ENCODE measurements at regions of chr2 and their contacts with region 1.

Region 1: GRCh38 chr2:157302492-157303099 is 23.0 kb downstream of the ERMN start:
- DNase-seq: peak; percentile 34
- H3K27ac ChIP-seq: no peak overlapping the region
- CTCF ChIP-seq: peak; percentile 83

Region 2: DNA sequence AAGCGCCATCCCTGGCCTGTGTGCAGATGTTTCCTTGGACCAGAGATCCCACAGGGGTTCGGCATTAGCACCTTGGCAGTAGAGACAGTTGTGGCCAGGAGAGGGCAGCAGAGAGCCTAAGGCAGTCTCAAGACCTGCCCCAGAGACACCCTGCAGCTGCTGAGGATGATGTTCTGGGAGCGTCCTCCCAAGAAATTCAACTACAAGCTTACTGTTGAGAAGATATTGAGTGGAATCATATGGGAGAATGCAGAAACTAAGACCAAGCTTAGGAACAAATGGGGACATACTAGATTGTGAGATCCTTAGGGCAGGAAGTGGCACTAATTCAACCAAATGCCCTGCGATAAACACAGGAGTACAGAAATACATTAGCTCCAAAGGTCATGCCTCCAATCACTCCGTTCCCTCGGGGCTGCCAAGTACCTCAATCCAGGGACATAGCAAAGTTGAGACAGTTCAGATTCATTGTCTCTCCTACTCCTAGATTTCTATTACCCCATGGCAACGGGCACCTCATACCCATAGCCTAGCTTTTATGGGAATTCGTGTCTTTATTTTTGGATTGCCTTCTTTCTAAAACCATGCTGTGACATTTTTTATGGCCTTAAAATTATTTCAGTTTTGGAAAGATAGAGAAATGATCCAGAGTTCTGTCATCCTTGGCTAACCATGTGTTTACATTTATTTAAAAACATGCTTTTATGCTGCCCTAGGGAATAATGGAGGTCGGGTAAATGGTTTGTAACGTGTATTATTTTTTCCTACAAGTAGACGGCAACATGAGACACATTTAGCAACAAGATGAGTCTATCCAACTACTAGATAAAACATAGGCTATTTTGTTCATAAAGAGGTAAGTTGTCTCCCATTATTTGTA is 25.3 kb after region 1 on chr2:
- CTCF ChIA-PET with region 1: interaction called, 17 read pairs
- POLR2A ChIA-PET with region 1: no interaction called
- DNase-seq: peak; percentile 72
- H3K27ac ChIP-seq: no peak overlapping the region
- CTCF ChIP-seq: peak; percentile 72

Region 3: DNA sequence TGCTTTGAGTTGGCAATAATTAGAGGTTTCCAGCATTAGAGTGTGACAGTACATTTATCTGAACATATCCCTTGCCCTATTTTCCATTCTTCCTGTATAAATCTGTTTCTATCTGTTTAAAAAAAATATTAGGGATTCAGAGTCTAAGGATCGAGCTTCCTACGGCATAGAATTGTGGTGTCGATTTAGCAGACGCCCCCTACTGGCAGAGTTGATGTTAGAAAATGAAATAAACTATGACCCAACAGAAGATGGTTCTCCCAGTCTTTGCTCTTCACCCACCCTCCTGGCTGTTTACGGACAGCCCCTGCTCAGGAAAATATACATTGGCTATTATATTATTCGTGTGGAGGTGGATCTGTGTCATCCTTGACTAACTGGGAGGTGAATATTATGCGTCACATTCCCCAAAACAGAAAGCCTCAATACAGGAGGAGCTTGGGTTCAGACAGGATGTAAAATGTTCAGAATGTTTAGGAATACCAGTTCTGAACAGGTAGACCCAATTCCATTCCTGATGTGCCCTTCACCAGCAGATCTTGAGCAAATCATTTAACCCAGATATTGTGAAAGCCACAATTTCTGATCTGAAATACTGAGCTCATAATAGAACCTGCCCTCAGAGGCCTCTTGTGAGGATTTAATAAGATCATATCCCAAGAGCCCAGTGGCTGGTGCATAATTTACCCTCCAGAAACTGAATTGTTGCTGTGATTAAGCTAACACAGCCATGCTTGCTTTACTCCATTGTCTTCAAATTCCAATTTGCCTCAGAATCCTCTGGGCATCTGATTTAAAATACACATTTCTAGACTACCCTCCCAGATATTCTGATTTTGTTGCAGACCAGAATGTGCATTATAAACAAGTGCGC is 33.8 kb after region 1 on chr2:
- CTCF ChIA-PET with region 1: interaction called, 24 read pairs
- POLR2A ChIA-PET with region 1: no interaction called
- DNase-seq: no peak
- H3K27ac ChIP-seq: no peak overlapping the region
- CTCF ChIP-seq: peak; percentile 68

Measured in RWPE1 (cell line).